HEK293 (cell line): ENCODE measurements at regions of chr1 and their contacts with region 1.

Region 1: GRCh38 chr1:161502641-161503393 is 2.4 kb upstream of the FCGR2A start:
- H3K4me3 ChIP-seq: no peak overlapping the region
- H3K27ac ChIP-seq: no peak overlapping the region
- H3K4me1 ChIP-seq: peaks cover 16% of the 10 kb centered on the region
- CTCF ChIP-seq: no peak

Region 2: DNA sequence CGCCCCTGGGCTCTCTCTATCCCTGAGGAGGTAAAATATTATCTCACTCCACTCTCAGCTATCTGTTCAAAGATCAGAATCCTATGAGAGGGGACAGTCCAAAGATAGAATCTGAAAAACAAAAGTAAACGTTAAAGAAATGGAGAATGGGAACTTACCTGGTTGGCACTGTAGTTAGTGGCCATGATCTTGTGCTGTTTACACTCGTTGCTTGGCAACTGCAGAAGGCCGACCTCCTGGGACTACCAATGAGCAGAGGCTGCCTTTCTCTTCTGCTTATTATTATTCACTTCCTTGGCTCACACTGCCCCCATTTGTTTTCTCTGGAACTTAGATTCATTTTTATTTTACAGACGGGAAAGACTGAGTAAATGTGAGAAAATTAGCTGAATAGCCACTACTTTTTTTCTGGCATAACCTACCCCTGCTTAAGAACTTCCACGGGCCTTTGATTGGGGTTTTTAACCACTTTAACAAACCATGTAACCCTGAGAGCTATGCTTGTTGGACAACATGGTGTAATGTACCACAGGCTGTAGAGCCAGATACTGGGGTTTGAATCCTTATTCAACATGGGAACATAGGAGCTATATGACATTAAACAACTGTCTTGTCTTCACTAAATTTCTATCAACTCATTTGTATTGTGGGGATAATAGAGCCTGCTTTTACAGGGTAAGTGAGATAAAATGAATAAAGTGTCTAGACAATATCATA is 135.0 kb before region 1 on chr1 and contains the start of gene CFAP126:
- CTCF ChIA-PET with region 1: no interaction called
- POLR2A ChIA-PET with region 1: no interaction called
- H3K4me3 ChIP-seq: no peak within 1 kb of the TSS
- H3K27ac ChIP-seq: no peak within 1 kb of the TSS
- H3K4me1 ChIP-seq: 0 out of 2 replicates have a peak, but pooled peaks cover 2% of the 10 kb centered on the region
- CTCF ChIP-seq: no peak

Region 3: DNA sequence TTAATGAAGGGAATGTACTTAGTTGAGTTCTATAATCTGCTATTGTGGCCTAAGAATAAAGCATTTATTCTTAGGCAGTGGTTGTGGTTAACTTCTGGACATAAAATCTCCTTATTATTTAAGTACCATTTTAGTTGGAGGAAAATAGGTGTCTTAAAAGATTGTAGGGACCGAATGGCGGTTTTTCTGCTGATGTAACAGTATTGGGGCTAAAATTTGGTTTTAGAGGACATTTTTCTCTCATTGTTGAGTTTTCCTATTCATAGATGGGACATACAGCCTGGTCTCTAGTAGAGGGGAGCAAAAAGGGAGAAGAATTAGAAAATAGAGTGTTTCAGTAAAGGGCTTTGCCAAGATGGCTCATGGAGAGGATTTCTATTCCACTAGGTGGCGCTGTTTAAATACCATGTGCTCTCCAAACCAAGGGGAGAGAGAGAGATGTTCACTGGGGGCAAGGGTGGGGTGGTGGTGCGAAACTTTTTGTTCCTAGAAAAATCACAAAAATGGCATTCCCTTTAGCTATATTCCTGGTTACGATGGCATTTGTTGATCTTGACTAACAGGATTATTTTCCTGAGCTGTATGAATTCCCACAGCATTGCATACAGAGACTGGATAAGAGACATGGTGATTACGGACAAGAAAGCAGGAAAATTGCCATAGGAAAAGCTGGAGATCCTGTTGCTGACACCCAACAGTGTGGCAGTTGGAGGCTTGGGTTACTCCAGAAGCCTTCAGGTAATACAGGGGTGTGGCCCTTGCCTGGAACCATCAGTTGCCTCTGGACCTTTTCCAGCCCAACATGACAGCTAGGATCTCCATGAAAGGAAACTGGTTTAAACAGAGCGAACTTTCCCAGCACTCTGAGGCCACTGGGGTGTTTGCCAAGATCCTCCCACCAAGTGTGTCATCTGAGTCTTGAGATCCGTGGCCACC is 15.7 kb before region 1 on chr1:
- CTCF ChIA-PET with region 1: interaction called, 12 read pairs
- POLR2A ChIA-PET with region 1: no interaction called
- H3K4me3 ChIP-seq: no peak overlapping the region
- H3K27ac ChIP-seq: no peak overlapping the region
- H3K4me1 ChIP-seq: no peaks in the 10 kb centered on the region
- CTCF ChIP-seq: peak; percentile 60